ENCODE measurements at regions of chr12 and their contacts with region 1.

Region 1: GRCh38 chr12:53719649-53720048 is 7.6 kb downstream of the CALCOCO1 start:
- DNase-seq: no peak
- H3K4me3 ChIP-seq: no peak overlapping the region
- H3K27ac ChIP-seq: no peak overlapping the region
- H3K4me1 ChIP-seq: no peaks in the 10 kb centered on the region
- H3K27me3 ChIP-seq: no peaks in the 10 kb centered on the region
- CTCF ChIP-seq: no peak

Region 2: GRCh38 chr12:53613821-53614220 is 105.8 kb before region 1 on chr12:
- intact Hi-C with region 1: no loop called
- DNase-seq: no peak
- H3K4me3 ChIP-seq: no peak overlapping the region
- H3K27ac ChIP-seq: peak overlapping the region in 1 of 2 donors; percentile 1
- H3K4me1 ChIP-seq: peaks cover 0 to 27% of the 10 kb centered on the region in 2 donors
- H3K27me3 ChIP-seq: no peaks in the 10 kb centered on the region
- CTCF ChIP-seq: no peak

Region 3: GRCh38 chr12:53738406-53739213 is 19.0 kb after region 1 on chr12:
- intact Hi-C with region 1: loop called (anchors 2 kb)
- DNase-seq: no peak
- H3K4me3 ChIP-seq: no peak overlapping the region
- H3K27ac ChIP-seq: no peak overlapping the region
- H3K4me1 ChIP-seq: peaks cover 0 to 20% of the 10 kb centered on the region in 2 donors
- H3K27me3 ChIP-seq: no peaks in the 10 kb centered on the region
- CTCF ChIP-seq: no peak

Measured in ascending aorta (tissue), 2 donors.